Activated CD8-positive, alpha-beta memory T cell treated with anti-CD3 and anti-CD28 coated beads, Interleukin-2, amount 10 ng/mL, durations not matched to agents 7 days and 5 days (primary cell): ENCODE measurements at regions of chr9 and their contacts with region 1.

Region 1: DNA sequence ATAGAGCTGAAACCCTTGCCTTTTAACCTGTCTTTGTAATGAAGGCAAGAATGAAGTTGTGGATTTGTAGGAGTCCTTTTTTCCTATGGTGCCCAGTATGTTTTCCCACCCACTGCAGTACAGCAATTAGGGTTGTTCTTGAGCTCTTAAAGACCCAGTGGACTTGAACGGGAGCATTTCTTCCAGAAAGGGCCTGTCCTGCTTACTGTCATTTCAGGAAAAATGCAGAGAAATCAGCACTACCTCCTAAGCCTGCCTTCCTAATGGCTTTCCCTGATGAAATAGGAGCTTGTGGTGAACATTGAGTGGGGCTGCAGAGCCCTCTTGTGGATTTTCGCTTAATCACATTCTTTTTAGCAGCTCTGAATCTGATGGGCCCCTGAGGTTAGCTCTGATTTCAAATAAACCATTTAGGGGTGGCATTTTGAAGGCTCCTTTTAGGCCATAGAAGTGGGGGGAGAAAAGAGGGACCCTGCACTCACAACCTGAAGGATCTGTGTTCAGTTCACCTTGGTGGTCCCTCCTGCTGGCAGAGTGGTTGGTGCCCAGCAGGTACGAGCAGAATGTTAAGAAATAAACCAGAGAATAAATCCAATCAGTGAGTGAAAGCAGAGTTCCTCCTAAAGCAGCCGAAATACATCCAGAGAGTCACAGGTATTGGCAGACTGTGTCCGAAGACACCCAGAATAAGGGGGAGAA is 188.0 kb upstream of the KLF9 start:
- DNase-seq: peak; percentile 54
- ATAC-seq: peak; percentile 73
- H3K4me3 Mint-ChIP-seq: no peak overlapping the region
- H3K27ac Mint-ChIP-seq: no peak overlapping the region
- H3K4me1 Mint-ChIP-seq: no peaks in the 10 kb centered on the region
- H3K27me3 Mint-ChIP-seq: no peaks in the 10 kb centered on the region

Region 2: DNA sequence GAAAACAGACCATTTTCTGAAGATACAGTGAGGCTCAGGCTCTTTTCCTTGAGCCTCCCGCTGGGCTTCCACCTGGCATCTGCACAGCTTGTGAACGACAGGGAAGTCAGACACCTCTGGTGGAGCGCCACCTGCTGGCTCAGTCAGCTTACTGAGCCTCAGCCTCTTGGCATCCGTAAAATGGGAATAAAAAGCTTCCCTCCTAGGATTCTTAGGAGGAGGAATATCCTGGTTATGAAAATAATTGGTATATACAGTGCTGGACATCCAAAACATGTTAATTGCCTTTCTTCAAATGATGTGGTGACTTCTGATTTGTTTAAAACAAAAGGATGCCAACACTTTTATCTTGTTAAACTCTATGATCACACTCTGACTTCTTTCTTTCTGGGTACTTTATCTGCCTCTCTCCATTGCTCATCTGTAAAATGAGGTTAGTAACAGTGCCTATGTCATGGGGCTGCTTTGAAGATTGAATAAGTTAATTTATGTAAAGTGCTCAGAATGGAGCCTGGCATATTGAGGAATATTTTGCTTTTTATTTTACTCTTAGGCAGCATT is 491.3 kb before region 1 on chr9:
- CTCF ChIA-PET with region 1: interaction called, 18 read pairs
- DNase-seq: peak; percentile 65
- ATAC-seq: no peak
- H3K4me3 Mint-ChIP-seq: no peak overlapping the region
- H3K27ac Mint-ChIP-seq: no peak overlapping the region
- H3K4me1 Mint-ChIP-seq: peaks cover 5% of the 10 kb centered on the region
- H3K27me3 Mint-ChIP-seq: peaks cover 21% of the 10 kb centered on the region

Region 3: DNA sequence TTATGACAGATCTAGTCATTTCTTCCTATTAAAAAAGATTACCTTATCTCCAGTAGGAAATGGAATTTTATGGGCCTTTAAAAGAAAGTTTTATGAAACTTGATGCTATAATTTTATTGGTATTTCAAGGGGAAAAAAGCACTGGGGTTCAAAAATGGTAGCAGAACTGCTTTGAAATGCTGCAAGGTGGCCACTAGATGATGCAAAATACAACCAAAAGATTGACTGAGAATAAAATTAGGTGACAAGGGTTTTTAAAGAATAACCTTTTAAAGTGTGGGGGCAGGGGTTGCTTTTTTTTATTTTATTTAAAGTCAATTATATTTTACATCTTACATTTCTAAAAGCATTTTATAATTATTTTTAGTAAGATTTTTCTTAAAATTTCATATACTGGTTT is 249.7 kb before region 1 on chr9:
- CTCF ChIA-PET with region 1: interaction called, 11 read pairs
- DNase-seq: no peak
- ATAC-seq: no peak
- H3K4me3 Mint-ChIP-seq: no peak overlapping the region
- H3K27ac Mint-ChIP-seq: peak overlapping the region; percentile 36
- H3K4me1 Mint-ChIP-seq: no peaks in the 10 kb centered on the region
- H3K27me3 Mint-ChIP-seq: no peaks in the 10 kb centered on the region

Region 4: DNA sequence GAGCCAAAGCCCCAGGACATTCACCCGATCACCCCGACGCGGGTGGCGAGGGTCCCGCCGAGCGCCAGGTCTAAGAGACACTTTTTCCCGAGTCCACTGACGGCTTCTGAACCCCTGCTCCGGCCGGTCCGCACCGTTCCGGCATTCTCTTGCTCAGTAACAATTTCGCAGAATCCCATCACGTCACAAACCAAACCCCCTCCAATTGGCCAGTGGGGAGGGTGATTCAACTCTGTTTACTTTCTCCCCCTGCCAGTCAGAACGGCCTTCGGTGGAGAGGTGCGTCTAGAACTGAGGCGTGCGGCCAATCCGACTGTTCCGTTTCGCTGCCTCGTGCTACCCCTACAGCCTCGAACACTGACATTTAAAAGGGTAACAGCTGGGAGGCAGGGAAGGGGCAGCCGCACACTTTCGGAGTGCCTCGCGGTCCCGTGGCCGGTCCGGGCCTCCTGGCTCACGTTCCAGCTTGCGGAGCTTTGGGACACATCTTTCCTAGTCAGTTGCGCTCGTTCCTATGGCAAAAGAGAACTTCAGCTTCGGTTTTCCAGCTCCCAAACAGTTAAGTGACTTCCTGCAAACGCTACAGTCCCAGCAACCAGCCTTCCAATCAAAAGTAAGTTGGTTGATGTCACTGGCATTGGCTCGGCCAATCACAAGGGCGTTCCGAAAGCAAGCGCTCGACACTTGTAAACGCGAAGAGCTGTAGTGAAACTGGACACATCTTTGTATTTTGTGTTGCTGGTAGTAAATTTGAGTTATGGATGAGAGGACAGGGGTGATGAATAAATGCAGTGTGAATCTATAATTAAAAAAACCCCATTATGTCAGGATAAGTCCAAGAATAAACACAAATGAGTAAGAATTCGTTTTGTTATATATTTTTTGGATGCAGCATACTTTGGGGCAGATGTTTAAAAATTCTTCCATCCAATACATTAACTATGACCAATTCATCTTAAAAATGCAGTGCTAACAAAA is 188.4 kb before region 1 on chr9 and contains the start of gene KLF9:
- CTCF ChIA-PET with region 1: interaction called, 13 read pairs
- DNase-seq: peak; percentile 98
- ATAC-seq: peak; percentile 83
- H3K4me3 Mint-ChIP-seq: peak within 1 kb of the TSS; percentile 92
- H3K27ac Mint-ChIP-seq: peak within 1 kb of the TSS; percentile 99
- H3K4me1 Mint-ChIP-seq: peaks cover 43% of the 10 kb centered on the region
- H3K27me3 Mint-ChIP-seq: no peaks in the 10 kb centered on the region
- total RNA-seq, gene KLF9: 12.0 to 12.2 TPM

Region 5: GRCh38 chr9:70587201-70587600 is 15.3 kb before region 1 on chr9:
- CTCF ChIA-PET with region 1: interaction called, 12 read pairs
- DNase-seq: no peak
- ATAC-seq: no peak
- H3K4me3 Mint-ChIP-seq: no peak overlapping the region
- H3K27ac Mint-ChIP-seq: no peak overlapping the region
- H3K4me1 Mint-ChIP-seq: no peaks in the 10 kb centered on the region
- H3K27me3 Mint-ChIP-seq: peaks cover 5% of the 10 kb centered on the region

Region 6: DNA sequence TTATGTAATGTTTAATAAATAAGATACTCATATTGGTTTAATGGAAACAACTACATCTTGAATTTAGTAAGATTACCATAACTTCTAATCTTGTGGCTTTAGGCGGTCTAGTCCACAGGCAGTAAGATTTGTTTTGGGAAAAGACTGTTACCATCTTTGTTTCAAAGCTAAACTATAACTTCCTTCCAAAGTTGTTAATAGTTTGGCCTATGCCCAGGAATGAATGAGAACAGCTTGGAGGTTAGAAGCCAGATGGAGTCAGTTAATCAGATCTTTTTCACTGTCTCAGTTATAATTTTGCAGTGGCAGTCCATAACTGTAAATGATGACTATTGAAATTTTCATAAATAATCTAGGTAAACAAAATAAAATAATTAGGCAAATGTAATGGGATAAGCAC is 53.8 kb after region 1 on chr9:
- CTCF ChIA-PET with region 1: no interaction called
- DNase-seq: no peak
- ATAC-seq: no peak
- H3K4me3 Mint-ChIP-seq: no peak overlapping the region
- H3K27ac Mint-ChIP-seq: no peak overlapping the region
- H3K4me1 Mint-ChIP-seq: peaks cover 3% of the 10 kb centered on the region
- H3K27me3 Mint-ChIP-seq: peaks cover 8% of the 10 kb centered on the region

Region 7: DNA sequence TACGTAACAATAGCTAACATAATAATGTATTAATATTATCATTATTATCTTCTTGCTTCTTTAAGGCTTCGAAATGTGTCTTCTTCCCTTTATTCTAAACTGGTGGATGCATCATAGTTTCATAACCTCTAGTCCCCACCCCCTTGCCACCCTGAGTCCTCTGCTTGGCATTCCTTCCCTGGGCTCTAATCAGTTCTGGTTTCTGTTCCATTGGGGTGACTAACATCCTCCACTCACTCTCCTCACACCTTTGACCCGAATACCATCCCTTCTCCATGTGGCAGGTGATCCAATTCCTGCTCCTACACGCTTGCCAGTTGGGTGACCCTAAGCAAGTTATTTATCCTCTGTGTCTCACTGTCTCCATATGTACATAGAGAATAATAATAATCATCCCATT is 232.9 kb after region 1 on chr9:
- CTCF ChIA-PET with region 1: no interaction called
- DNase-seq: no peak
- ATAC-seq: no peak
- H3K4me3 Mint-ChIP-seq: no peak overlapping the region
- H3K27ac Mint-ChIP-seq: no peak overlapping the region
- H3K4me1 Mint-ChIP-seq: no peaks in the 10 kb centered on the region
- H3K27me3 Mint-ChIP-seq: no peaks in the 10 kb centered on the region